Activated CD4-positive, alpha-beta memory T cell treated with anti-CD3 and anti-CD28 coated beads for 36 hours (primary cell): ENCODE measurements at regions of chr7 and their contacts with region 1.

Region 1: GRCh38 chr7:108415821-108416536 is 40.3 kb downstream of the NRCAM start:
- DNase-seq: peak; percentile 27
- H3K4me3 Mint-ChIP-seq: no peak overlapping the region
- H3K27ac Mint-ChIP-seq: no peak overlapping the region
- H3K4me1 Mint-ChIP-seq: peaks cover 5% of the 10 kb centered on the region
- H3K27me3 Mint-ChIP-seq: peaks cover 35% of the 10 kb centered on the region

Region 2: DNA sequence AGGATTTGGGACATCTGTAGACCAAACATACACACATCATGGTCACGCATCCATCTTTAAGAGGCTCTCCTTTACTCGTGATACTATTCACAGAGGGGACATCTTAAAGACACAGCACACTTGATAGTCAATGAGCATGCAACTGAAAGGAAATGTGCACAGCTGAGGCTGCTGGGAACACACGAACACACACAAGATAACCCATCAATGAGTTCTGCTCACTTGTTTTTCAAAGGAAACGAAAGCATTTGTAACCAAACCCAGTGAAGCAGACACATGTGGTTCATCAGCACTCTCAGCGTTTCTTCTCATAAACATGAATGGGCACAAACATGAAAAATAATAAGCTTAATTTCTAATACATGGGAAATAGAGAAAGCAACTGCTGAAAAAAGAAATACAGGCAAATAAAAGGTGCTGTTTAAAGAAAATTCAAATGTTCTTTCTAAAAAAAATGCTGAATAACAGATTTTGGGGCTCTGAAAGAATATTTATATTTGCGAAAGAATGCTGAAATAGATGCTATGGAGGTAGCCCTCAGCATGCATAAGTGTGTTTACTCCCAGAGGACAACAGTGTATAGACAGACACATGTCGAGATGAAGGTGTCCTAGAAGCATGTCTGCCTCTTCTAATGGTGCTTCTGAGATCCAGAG is 226.1 kb before region 1 on chr7:
- CTCF ChIA-PET with region 1: no interaction called
- POLR2A ChIA-PET with region 1: no interaction called
- intact Hi-C with region 1: no loop called
- DNase-seq: no peak
- H3K4me3 Mint-ChIP-seq: no peak overlapping the region
- H3K27ac Mint-ChIP-seq: no peak overlapping the region
- H3K4me1 Mint-ChIP-seq: no peaks in the 10 kb centered on the region
- H3K27me3 Mint-ChIP-seq: peaks cover 6% of the 10 kb centered on the region

Region 3: GRCh38 chr7:108311446-108312168 is 104.4 kb before region 1 on chr7:
- CTCF ChIA-PET with region 1: no interaction called
- POLR2A ChIA-PET with region 1: no interaction called
- intact Hi-C with region 1: loop called (anchors 5 kb)
- DNase-seq: no peak
- H3K4me3 Mint-ChIP-seq: no peak overlapping the region
- H3K27ac Mint-ChIP-seq: no peak overlapping the region
- H3K4me1 Mint-ChIP-seq: peaks cover 4% of the 10 kb centered on the region
- H3K27me3 Mint-ChIP-seq: peaks cover 2% of the 10 kb centered on the region